Activated CD4-positive, alpha-beta T cell treated with anti-CD3 and anti-CD28 coated beads for 36 hours (primary cell): ENCODE measurements at regions of chr2 and their contacts with region 1.

Region 1: GRCh38 chr2:240136013-240136670 is at the start of gene COPS9:
- DNase-seq: peak; percentile 93
- ATAC-seq: peak; percentile 96
- H3K4me3 Mint-ChIP-seq: peak within 1 kb of the TSS; percentile 88
- H3K27ac Mint-ChIP-seq: peak within 1 kb of the TSS; percentile 91
- H3K4me1 Mint-ChIP-seq: peaks cover 25% of the 10 kb centered on the region
- H3K27me3 Mint-ChIP-seq: no peaks in the 10 kb centered on the region
- total RNA-seq, gene COPS9: 62.6 to 92.1 TPM

Region 2: DNA sequence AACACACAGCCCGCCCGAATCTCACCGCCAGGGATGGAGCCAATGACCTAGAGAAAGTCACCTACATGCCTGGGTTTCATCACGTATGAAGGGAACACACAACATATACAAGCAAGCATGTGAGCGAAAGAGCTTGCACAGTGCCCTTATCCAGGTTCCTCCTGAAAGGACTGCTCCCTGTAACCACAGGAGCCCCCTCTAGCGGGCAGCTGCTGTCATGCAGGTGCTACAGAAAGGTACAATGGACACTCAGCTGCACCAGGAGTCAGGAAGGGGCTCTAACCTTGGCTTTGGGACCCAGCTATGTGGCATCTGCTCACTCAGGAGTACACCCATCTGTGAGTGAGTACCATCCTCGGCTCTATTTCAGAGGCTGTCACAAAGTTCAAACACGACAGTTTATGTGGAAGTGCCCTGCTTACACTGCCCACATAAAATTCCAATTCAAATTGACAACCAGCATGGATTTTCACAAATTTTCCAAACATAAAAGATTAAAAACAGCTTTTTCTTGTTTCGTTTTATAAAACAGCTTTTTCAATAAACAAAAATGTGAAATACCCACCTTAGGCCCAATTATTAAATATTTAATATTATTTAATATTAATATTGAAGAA is 114.5 kb before region 1 on chr2:
- CTCF ChIA-PET with region 1: no interaction called
- POLR2A ChIA-PET with region 1: no interaction called
- intact Hi-C with region 1: loop called in 1 of 2 experiments (anchors 1 kb)
- DNase-seq: peak; percentile 83
- ATAC-seq: peak; percentile 28
- H3K4me3 Mint-ChIP-seq: no peak overlapping the region
- H3K27ac Mint-ChIP-seq: no peak overlapping the region
- H3K4me1 Mint-ChIP-seq: peaks cover 25% of the 10 kb centered on the region
- H3K27me3 Mint-ChIP-seq: no peaks in the 10 kb centered on the region

Region 3: GRCh38 chr2:240196716-240197461 is 60.7 kb after region 1 on chr2:
- CTCF ChIA-PET with region 1: no interaction called
- POLR2A ChIA-PET with region 1: no interaction called
- intact Hi-C with region 1: no loop called
- DNase-seq: no peak
- ATAC-seq: no peak
- H3K4me3 Mint-ChIP-seq: no peak overlapping the region
- H3K27ac Mint-ChIP-seq: no peak overlapping the region
- H3K4me1 Mint-ChIP-seq: no peaks in the 10 kb centered on the region
- H3K27me3 Mint-ChIP-seq: peaks cover 26% of the 10 kb centered on the region